ENCODE measurements at regions of chr1 and their contacts with region 1.

Region 1: GRCh38 chr1:76330991-76331603 is 256.6 kb downstream of the ST6GALNAC3 start:
- DNase-seq: peak; percentile 17
- H3K4me3 ChIP-seq: no peak overlapping the region
- H3K27ac ChIP-seq: no peak overlapping the region
- H3K4me1 ChIP-seq: no peaks in the 10 kb centered on the region
- H3K27me3 ChIP-seq: no peaks in the 10 kb centered on the region
- CTCF ChIP-seq: peak; percentile 66 to 90 (median 74)
- POLR2A ChIP-seq: no peak

Region 2: GRCh38 chr1:76868154-76868882 is 537.2 kb after region 1 on chr1:
- intact Hi-C with region 1: loop called (anchors 5 kb)
- DNase-seq: no peak
- H3K4me3 ChIP-seq: peak overlapping the region; percentile 16 to 17
- H3K27ac ChIP-seq: no peak overlapping the region
- H3K4me1 ChIP-seq: peaks cover 9% of the 10 kb centered on the region
- H3K27me3 ChIP-seq: peaks cover 14% of the 10 kb centered on the region
- CTCF ChIP-seq: peak in 1 of 4 experiments; percentile 8
- POLR2A ChIP-seq: no peak